SK-N-SH (cell line): ENCODE measurements at regions of chr2 and their contacts with region 1.

Region 1: DNA sequence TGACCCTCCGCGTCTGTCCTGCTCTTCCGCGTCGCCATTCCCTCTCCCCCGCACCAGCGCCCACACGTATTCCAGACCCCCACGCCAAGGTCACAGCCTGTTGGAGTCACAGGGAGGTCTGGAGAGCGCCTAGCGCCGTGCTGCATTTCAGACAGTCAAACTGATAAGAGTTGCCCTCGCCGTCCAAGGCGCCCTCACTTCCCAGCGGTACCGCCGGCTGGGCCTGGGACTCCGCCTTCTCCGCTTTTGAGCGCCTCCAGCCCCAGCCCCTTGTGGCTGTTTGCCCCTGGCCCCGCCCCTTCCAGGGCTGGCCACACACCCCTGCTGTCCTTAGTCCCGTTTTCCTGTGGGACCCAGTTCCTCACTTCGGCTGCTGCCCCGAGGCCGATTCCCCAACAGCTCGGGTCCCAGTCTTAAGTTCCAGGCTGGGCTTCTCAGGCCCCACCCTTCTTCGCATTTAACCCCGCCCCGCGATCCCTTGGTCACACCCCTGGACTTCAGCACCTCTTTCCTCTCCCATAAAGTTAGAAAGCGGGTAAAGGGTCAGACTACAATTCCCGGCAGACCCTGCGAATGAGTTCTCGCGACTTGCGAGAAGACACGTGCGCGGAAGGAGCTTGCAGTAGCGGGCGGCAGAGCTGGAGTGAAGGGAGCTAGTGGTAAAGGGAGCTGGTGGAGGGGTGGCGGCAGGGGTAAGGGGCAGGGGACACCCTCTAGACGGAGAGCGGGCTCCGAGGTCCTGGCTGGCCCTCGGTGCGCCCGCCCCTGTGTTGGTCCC is at the start of gene GMPPA:
- DNase-seq: peak; percentile 93
- H3K4me3 ChIP-seq: peak within 1 kb of the TSS; percentile 81 to 85
- H3K27ac ChIP-seq: peak within 1 kb of the TSS; percentile 81 to 99
- H3K4me1 ChIP-seq: peaks cover 16 to 68% of the 10 kb centered on the region in 2 experiments
- H3K27me3 ChIP-seq: no peaks in the 10 kb centered on the region
- CTCF ChIP-seq: no peak; the same call in 1 of the 2 replicates
- EP300 ChIP-seq: no peak
- RAD21 ChIP-seq: no peak
- polyA plus RNA-seq, gene GMPPA: 61.3 and 75.1 TPM in 2 replicates

Region 2: DNA sequence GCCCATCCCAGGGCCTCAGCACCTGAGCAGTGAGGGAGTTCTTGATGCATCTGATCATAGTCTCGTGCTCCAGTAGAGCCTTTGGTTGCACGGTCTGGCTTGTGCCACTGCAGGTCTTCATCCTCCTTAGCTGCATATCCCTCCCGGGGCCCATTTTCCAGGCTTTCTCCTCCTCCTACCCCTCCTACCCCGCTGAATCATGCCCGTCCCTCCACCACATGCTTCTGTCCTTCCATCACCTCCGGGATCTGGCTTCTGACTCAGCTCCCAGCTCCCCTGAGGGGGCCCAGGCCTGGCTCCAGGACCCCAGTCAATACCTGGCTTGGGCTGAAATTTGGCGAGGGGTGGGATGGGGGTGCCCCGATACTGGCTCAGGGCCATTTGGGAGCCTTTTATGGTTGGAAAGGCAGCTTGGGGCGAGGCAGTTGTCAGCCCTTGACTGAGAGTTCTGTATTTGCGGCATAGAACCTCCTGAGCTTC is 45.6 kb before region 1 on chr2:
- CTCF ChIA-PET with region 1: interaction called, 11 read pairs
- POLR2A ChIA-PET with region 1: interaction called, 4 read pairs
- DNase-seq: peak; percentile 63
- H3K4me3 ChIP-seq: no peak overlapping the region
- H3K27ac ChIP-seq: peak overlapping the region; percentile 90 to 98
- H3K4me1 ChIP-seq: peaks cover 29 to 35% of the 10 kb centered on the region in 2 experiments
- H3K27me3 ChIP-seq: no peaks in the 10 kb centered on the region
- CTCF ChIP-seq: no peak
- EP300 ChIP-seq: peak in 1 of 2 experiments; percentile 96; a peak in 2 of 4 replicates
- RAD21 ChIP-seq: no peak

Region 3: DNA sequence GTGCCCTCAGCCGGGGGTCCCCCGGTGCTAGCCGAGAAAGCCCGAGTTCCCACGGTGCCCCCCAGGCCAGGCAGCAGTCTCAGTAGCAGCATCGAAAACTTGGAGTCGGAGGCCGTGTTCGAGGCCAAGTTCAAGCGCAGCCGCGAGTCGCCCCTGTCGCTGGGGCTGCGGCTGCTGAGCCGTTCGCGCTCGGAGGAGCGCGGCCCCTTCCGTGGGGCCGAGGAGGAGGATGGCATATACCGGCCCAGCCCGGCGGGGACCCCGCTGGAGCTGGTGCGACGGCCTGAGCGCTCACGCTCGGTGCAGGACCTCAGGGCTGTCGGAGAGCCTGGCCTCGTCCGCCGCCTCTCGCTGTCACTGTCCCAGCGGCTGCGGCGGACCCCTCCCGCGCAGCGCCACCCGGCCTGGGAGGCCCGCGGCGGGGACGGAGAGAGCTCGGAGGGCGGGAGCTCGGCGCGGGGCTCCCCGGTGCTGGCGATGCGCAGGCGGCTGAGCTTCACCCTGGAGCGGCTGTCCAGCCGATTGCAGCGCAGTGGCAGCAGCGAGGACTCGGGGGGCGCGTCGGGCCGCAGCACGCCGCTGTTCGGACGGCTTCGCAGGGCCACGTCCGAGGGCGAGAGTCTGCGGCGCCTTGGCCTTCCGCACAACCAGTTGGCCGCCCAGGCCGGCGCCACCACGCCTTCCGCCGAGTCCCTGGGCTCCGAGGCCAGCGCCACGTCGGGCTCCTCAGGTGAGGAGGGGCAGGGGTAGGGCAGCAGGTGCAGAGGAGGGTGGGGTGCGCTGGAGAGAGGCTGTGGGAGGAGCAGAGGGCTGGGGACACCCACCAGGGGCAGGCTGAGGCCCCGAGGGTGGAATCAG is 13.9 kb before region 1 on chr2:
- CTCF ChIA-PET with region 1: interaction called, 2,824 read pairs
- POLR2A ChIA-PET with region 1: interaction called, 12 read pairs
- DNase-seq: no peak
- H3K4me3 ChIP-seq: no peak overlapping the region
- H3K27ac ChIP-seq: no peak overlapping the region
- H3K4me1 ChIP-seq: no peaks in the 10 kb centered on the region
- H3K27me3 ChIP-seq: no peaks in the 10 kb centered on the region
- CTCF ChIP-seq: no peak
- EP300 ChIP-seq: no peak
- RAD21 ChIP-seq: no peak

Region 4: GRCh38 chr2:219509780-219510511 is 11.5 kb after region 1 on chr2:
- CTCF ChIA-PET with region 1: interaction called, 2,824 read pairs
- POLR2A ChIA-PET with region 1: interaction called, 44 read pairs
- DNase-seq: peak; percentile 83
- H3K4me3 ChIP-seq: peak overlapping the region; percentile 36 to 46; a peak in 3 of 4 replicates
- H3K27ac ChIP-seq: peak overlapping the region in 1 of 2 experiments; percentile 96; a peak in 2 of 4 replicates
- H3K4me1 ChIP-seq: peaks cover 3 to 99% of the 10 kb centered on the region in 2 experiments; a peak in 2 of 4 replicates
- H3K27me3 ChIP-seq: peaks cover 21% of the 10 kb centered on the region
- CTCF ChIP-seq: peak; percentile 76
- EP300 ChIP-seq: peak in 1 of 2 experiments; percentile 13; a peak in 1 of 4 replicates
- RAD21 ChIP-seq: peak; percentile 77

Region 5: DNA sequence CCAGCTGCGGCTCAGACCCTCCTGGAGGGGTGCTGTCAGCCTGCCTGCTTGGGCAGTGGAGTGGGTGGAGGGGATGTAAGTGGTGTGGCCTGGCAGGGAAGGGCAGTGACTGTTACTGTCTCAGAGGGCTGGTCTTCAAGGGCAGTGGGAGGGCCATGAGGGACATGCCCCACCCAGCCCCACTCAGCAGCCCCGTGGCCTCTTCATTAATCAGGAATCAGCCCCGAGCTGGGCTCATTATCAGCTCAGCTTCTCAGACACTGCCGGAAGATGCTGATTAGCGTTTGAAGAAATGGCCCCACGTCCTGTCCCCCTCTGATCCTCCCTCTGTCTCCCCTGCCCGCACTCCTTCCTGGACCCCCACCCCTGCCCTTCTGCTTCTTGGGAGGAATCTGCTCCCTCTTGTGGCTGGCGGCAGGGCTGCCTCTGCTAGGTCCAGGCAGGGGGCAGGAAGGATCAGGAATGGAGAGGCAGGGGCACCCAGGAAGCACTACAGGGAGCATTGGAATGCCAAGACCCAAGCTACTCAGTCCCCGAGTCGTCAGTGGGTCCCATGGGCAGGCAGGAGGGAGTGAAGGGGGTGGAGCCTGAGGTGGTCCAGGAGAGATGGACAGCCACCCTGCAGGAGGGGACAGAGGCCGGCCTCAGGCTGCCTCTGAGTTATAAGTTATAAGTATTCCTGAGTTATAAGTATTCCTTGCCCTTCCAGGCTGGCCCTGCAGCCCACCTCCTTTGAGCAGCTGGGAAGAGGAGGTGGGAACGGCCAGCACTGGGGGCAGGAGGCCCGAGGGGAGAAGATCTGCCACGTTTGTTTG is 22.8 kb after region 1 on chr2:
- CTCF ChIA-PET with region 1: interaction called, 2,824 read pairs
- POLR2A ChIA-PET with region 1: interaction called, 53 read pairs
- DNase-seq: peak; percentile 91
- H3K4me3 ChIP-seq: peak overlapping the region; percentile 28 to 45
- H3K27ac ChIP-seq: peak overlapping the region in 1 of 2 experiments; percentile 90; a peak in 2 of 4 replicates
- H3K4me1 ChIP-seq: peaks cover 12 to 76% of the 10 kb centered on the region in 2 experiments; a peak in 1 of 4 replicates
- H3K27me3 ChIP-seq: 0 out of 2 replicates have a peak, but pooled peaks cover 7% of the 10 kb centered on the region
- CTCF ChIP-seq: peak; percentile 82
- EP300 ChIP-seq: no peak
- RAD21 ChIP-seq: peak; percentile 66

Region 6: DNA sequence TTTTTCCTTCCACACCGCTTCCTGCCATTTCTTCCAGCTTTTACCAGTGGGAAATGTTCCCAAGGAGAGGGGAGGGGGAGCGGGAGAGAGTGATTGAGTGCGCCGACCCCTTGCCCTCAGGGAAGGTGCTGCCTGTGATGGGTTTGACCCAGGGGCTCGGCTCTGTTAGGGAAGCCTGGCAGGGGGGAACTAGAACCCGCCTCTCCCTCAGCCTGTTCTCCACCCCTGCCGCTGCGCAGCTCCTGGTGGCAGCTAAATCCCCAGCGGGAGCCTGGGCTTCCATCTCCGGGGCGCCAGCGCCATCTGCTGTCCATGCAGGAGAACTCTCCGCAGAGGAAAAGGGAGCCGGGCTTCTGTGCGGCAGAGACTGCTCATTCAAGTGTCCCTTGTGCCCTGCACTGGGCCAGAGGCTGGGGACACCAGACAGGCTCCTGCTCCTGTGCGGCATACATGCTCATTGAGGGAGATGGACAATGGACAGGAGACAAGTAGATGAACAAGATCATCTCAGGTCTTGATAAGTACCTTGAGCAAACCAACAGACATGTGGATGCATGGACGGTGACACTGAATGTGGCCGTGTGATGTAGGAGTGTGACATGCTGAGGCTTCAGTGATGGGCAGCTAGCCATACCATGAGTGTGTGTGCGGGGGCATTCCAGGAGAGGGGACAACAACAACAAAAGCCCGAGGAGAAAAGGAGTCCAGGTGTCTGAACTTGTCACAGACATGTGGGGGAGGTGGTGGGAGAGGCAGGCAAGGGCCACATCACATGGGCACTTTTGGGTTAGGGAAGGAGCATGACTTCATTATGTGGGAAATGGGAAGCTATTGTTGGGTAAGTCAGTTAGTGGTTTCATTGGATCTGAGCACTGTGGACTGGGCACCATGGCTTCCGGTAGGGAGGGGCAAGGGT is 31.8 kb after region 1 on chr2:
- CTCF ChIA-PET with region 1: interaction called, 2,824 read pairs
- POLR2A ChIA-PET with region 1: interaction called, 53 read pairs
- DNase-seq: peak; percentile 93
- H3K4me3 ChIP-seq: peak overlapping the region; percentile 28 to 36; a peak in 3 of 4 replicates
- H3K27ac ChIP-seq: peak overlapping the region in 1 of 2 experiments; percentile 12; a peak in 1 of 4 replicates
- H3K4me1 ChIP-seq: peaks cover 0 to 38% of the 10 kb centered on the region in 2 experiments; a peak in 2 of 4 replicates
- H3K27me3 ChIP-seq: no peaks in the 10 kb centered on the region; the same call in 1 of the 2 replicates
- CTCF ChIP-seq: peak; percentile 91
- EP300 ChIP-seq: no peak
- RAD21 ChIP-seq: peak; percentile 99